ENCODE measurements at regions of chr1 and their contacts with region 1.

Region 1: GRCh38 chr1:98053471-98054366 is 132.9 kb upstream of the DPYD start:
- DNase-seq: peak; percentile 87
- H3K4me3 ChIP-seq: peak overlapping the region; percentile 47 to 56; a peak in 3 of 4 replicates
- H3K27ac ChIP-seq: peak overlapping the region; percentile 72 to 82; a peak in 3 of 4 replicates
- H3K4me1 ChIP-seq: peaks cover 9 to 12% of the 10 kb centered on the region in 2 experiments; a peak in 3 of 4 replicates
- H3K27me3 ChIP-seq: no peaks in the 10 kb centered on the region
- CTCF ChIP-seq: peak; percentile 69
- EP300 ChIP-seq: no peak
- RAD21 ChIP-seq: peak; percentile 68

Region 2: GRCh38 chr1:97693601-97694000 is 360.1 kb before region 1 on chr1:
- CTCF ChIA-PET with region 1: no interaction called
- POLR2A ChIA-PET with region 1: no interaction called
- DNase-seq: no peak
- H3K4me3 ChIP-seq: no peak overlapping the region
- H3K27ac ChIP-seq: no peak overlapping the region
- H3K4me1 ChIP-seq: peaks cover 0 to 2% of the 10 kb centered on the region in 2 experiments; a peak in 1 of 4 replicates
- H3K27me3 ChIP-seq: no peaks in the 10 kb centered on the region
- CTCF ChIP-seq: no peak
- EP300 ChIP-seq: no peak
- RAD21 ChIP-seq: no peak

Region 3: DNA sequence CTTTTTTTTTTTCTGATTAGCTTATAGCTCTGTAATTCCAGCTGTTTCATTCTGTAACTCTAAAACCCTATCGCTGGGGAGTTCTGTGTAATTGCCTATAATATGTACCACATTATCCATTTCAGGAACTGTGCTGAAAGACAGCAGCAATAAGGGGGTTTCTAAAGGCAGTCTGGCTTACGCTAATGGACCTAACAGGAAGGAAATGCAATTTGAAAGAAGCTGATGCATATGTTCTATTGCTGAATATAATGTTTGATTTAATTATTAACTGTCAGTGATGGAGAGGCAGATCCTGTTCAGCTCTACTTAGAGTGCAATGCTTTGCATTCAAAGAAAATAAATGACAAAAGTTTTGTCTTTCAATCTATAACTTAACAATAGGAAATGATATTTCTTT is 398.4 kb after region 1 on chr1:
- CTCF ChIA-PET with region 1: interaction called, 18 read pairs
- POLR2A ChIA-PET with region 1: interaction called, 4 read pairs
- DNase-seq: peak; percentile 31
- H3K4me3 ChIP-seq: no peak overlapping the region
- H3K27ac ChIP-seq: peak overlapping the region in 1 of 2 experiments; percentile 99; a peak in 2 of 4 replicates
- H3K4me1 ChIP-seq: peaks cover 8 to 16% of the 10 kb centered on the region in 2 experiments; a peak in 3 of 4 replicates
- H3K27me3 ChIP-seq: no peaks in the 10 kb centered on the region
- CTCF ChIP-seq: no peak
- EP300 ChIP-seq: peak in 1 of 2 experiments; percentile 96; a peak in 2 of 4 replicates
- RAD21 ChIP-seq: peak; percentile 45; the same call in 1 of the 2 replicates

Measured in SK-N-SH (cell line).